ENCODE measurements at regions of chr11 and their contacts with region 1.

Region 1: DNA sequence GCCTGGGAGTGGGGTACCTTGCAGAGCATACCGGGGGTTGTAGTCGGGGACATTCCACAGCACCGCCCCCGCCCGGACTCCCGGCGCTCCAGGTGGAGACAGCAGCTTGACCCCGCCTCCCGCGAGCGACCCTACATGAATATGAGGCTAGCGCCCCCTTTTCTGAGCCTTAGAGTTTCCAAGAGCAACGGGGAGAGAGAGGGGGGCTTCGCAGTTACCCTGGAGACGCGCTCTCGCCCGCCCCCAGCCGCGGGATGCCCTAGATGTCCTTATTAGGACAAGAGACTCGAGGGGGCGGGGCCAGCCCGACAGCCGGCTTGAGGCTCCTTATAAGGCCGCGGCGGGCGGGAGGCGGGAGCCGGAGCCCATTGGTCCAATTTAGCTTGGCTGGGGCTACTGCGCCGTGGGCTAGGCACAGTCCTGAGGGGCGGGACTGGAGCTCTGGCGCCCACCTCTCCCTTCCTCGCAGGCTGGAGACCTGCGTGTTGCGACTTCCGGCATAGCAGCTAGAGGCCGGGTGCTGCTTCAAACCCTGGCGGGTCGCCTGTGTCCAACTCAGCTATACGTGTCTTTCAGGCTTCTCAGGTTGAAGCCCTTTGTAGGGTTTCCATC is 927 bp upstream of the MUS81 start:
- DNase-seq: peak; percentile 96 to 100 (median 98)

Region 2: GRCh38 chr11:65888163-65888814 is 29.0 kb after region 1 on chr11 and contains the start of gene FIBP:
- intact Hi-C with region 1: loop called (anchors 5 kb)
- DNase-seq: peak; percentile 92 to 99 (median 97)

Region 3: GRCh38 chr11:65961232-65961901 is 102.1 kb after region 1 on chr11 and contains the start of gene SART1:
- intact Hi-C with region 1: loop called (anchors 5 kb)
- DNase-seq: peak; percentile 93 to 100 (median 98)